Aorta (tissue), 5 donors: ENCODE measurements at regions of chr7 and their contacts with region 1.

Region 1: DNA sequence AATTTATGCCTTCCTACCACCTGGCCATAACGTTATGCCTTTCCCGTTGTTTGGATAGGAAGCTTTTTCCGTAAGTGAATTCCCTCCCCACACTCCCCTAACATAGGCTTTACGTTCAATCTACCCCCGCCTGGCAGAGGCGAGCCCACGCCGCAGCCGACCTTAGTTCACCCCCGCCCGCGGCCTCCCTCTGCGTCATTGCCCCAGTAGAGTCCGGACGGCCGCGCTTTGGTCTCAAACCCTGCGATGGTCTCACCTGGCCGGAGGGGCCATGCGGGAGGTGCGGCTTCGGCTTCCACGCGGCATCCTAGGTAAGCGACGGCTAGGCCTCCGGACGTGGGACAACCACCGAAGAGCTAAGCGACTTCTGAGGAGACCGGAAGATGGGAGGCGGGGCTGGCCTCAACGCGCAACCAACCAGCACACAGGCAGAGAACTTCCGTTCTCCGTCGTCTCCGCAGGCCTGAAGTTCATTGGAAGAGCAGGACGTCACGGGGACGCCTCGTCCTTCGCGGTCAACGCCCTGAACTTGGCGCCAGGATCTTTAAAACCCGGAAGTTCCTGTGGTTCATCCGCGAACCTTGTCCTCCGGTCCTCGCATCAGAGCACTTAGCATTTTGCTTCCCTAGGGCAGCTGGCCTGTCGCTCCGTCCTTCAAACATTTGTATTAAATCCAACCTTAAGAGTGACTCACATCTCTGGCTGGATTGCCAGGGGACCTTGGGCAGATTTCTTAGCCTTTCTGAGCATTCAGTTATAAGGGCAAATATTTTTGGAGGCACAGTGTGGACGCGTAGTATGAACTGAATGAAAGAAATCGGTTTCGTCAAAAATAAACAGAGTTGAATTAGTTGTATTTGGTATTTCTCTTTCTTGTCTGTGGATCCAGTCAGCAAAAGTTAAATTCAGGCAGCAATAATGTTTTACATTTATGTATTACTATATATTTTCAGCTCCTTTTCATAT is at the start of gene CHCHD2:
- DNase-seq: peak; percentile 97 to 99
- ATAC-seq: peak; percentile 100
- H3K4me3 ChIP-seq: peak within 1 kb of the TSS; percentile 98
- H3K27ac ChIP-seq: peak within 1 kb of the TSS; percentile 77 to 87
- H3K4me1 ChIP-seq: no peaks in the 10 kb centered on the region
- H3K27me3 ChIP-seq: no peaks in the 10 kb centered on the region
- total RNA-seq, gene CHCHD2: 187 to 240 TPM

Region 2: GRCh38 chr7:55784151-55784550 is 322.2 kb before region 1 on chr7:
- intact Hi-C with region 1: no loop called
- DNase-seq: no peak
- ATAC-seq: no peak
- H3K4me3 ChIP-seq: no peak overlapping the region
- H3K27ac ChIP-seq: no peak overlapping the region
- H3K4me1 ChIP-seq: no peaks in the 10 kb centered on the region
- H3K27me3 ChIP-seq: no peaks in the 10 kb centered on the region

Region 3: GRCh38 chr7:56051339-56052191 is 54.8 kb before region 1 on chr7 and contains the starts of genes CCT6A and PSPH:
- intact Hi-C with region 1: no loop called
- DNase-seq: peak; percentile 98 to 99
- ATAC-seq: peak; percentile 100
- H3K4me3 ChIP-seq: peak within 1 kb of the TSS; percentile 71 to 83
- H3K27ac ChIP-seq: peak within 1 kb of the TSS; percentile 34 to 90
- H3K4me1 ChIP-seq: no peaks in the 10 kb centered on the region
- H3K27me3 ChIP-seq: no peaks in the 10 kb centered on the region
- total RNA-seq, gene CCT6A: 80.6 to 82.8 TPM
- total RNA-seq, gene PSPH: 4.3 to 5.7 TPM

Region 4: GRCh38 chr7:56125831-56126230 is 19.4 kb after region 1 on chr7:
- intact Hi-C with region 1: no loop called
- DNase-seq: no peak
- ATAC-seq: no peak
- H3K4me3 ChIP-seq: no peak overlapping the region
- H3K27ac ChIP-seq: no peak overlapping the region
- H3K4me1 ChIP-seq: no peaks in the 10 kb centered on the region
- H3K27me3 ChIP-seq: no peaks in the 10 kb centered on the region

Region 5: GRCh38 chr7:56287421-56288138 is 181.2 kb after region 1 on chr7:
- intact Hi-C with region 1: loop called (anchors 5 to 10 kb)
- DNase-seq: peak; percentile 66 to 86
- ATAC-seq: peak; percentile 87
- H3K4me3 ChIP-seq: peak overlapping the region in 1 of 2 donors; percentile 41
- H3K27ac ChIP-seq: peak overlapping the region in 1 of 2 donors; percentile 6
- H3K4me1 ChIP-seq: no peaks in the 10 kb centered on the region
- H3K27me3 ChIP-seq: no peaks in the 10 kb centered on the region